Natural killer cell (primary cell): ENCODE measurements at regions of chr6 and their contacts with region 1.

Region 1: DNA sequence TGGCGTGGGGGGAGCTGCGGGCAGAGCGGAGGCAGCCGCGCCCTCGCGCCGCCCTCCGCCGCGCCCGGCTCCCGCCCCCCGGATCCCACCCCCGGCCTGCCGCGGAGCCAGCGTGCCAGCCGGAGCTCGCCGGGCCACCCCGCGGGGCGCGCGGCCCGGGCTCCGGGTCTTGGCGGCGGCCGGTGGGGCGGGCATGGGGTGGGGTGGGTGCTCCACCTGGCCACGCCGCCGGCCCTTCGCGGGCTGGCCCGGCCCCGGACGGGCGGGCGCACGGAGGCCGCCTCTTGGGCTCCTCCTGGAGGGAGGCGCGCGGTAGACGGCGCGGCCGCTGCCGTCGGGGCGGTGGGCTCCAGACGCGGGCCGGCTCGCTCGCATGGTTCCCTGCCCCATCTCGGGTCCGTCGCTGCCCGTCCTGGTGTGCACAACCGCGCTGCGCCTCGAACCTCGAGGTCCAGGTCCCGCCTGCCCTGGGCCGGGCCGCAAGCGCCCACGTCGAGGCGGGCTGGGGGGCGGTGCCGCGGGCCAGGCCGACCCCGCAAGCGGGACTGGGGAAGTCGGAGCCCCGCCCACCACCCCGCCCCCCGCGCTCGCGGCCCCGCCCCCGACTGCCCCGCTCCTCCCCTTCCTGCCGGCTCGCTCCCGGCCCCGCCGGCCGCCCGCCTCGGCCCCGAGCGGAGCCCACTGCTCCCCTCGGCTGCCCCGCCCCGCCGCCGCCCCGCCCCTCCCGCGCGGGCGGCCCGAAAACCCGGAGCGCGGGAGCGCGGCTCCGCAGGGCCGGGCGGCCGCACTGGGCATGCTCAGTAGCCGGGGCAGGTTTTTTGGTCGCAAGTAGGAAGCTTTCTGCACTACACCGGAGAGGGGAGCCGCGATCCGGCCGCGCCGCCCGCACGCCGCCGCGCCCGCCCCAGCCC is at the start of gene CDYL:
- DNase-seq: peak; percentile 90 to 94
- ATAC-seq: peak; percentile 77 to 92 (median 80)
- H3K4me3 ChIP-seq: peak within 1 kb of the TSS; percentile 53
- H3K4me3 Mint-ChIP-seq: peak within 1 kb of the TSS; percentile 97
- H3K27ac ChIP-seq: peak within 1 kb of the TSS; percentile 46
- H3K27ac Mint-ChIP-seq: peak within 1 kb of the TSS; percentile 88 to 95
- H3K4me1 ChIP-seq: peaks cover 10% of the 10 kb centered on the region
- H3K4me1 Mint-ChIP-seq: peaks cover 43 to 45% of the 10 kb centered on the region in 2 donors
- H3K27me3 ChIP-seq: no peaks in the 10 kb centered on the region
- H3K27me3 Mint-ChIP-seq: no peaks in the 10 kb centered on the region
- CTCF ChIP-seq: no peak
- total RNA-seq, gene CDYL: 81.3 to 101 (median 83.8) TPM

Region 2: GRCh38 chr6:4018172-4018905 is 757.5 kb before region 1 on chr6:
- intact Hi-C with region 1: loop called (anchors 10 kb)
- DNase-seq: peak; percentile 91 to 99
- ATAC-seq: peak; percentile 67 to 86 (median 73)
- H3K4me3 ChIP-seq: peak overlapping the region; percentile 91
- H3K4me3 Mint-ChIP-seq: peak overlapping the region; percentile 98
- H3K27ac ChIP-seq: peak overlapping the region; percentile 98
- H3K27ac Mint-ChIP-seq: peak overlapping the region; percentile 98
- H3K4me1 ChIP-seq: peaks cover 20% of the 10 kb centered on the region
- H3K4me1 Mint-ChIP-seq: peaks cover 59 to 68% of the 10 kb centered on the region in 2 donors
- H3K27me3 ChIP-seq: no peaks in the 10 kb centered on the region
- H3K27me3 Mint-ChIP-seq: no peaks in the 10 kb centered on the region
- CTCF ChIP-seq: peak; percentile 33

Region 3: GRCh38 chr6:4606821-4607704 is 168.8 kb before region 1 on chr6:
- intact Hi-C with region 1: loop called (anchors 10 kb)
- DNase-seq: peak in 1 of 2 donors; percentile 19
- ATAC-seq: peak; percentile 34 to 69 (median 51)
- H3K4me3 ChIP-seq: peak overlapping the region; percentile 15
- H3K4me3 Mint-ChIP-seq: peak overlapping the region; percentile 81
- H3K27ac ChIP-seq: peak overlapping the region; percentile 45
- H3K27ac Mint-ChIP-seq: peak overlapping the region; percentile 77 to 84
- H3K4me1 ChIP-seq: peaks cover 49% of the 10 kb centered on the region
- H3K4me1 Mint-ChIP-seq: peaks cover 64 to 69% of the 10 kb centered on the region in 2 donors
- H3K27me3 ChIP-seq: no peaks in the 10 kb centered on the region
- H3K27me3 Mint-ChIP-seq: no peaks in the 10 kb centered on the region
- CTCF ChIP-seq: no peak

Region 4: DNA sequence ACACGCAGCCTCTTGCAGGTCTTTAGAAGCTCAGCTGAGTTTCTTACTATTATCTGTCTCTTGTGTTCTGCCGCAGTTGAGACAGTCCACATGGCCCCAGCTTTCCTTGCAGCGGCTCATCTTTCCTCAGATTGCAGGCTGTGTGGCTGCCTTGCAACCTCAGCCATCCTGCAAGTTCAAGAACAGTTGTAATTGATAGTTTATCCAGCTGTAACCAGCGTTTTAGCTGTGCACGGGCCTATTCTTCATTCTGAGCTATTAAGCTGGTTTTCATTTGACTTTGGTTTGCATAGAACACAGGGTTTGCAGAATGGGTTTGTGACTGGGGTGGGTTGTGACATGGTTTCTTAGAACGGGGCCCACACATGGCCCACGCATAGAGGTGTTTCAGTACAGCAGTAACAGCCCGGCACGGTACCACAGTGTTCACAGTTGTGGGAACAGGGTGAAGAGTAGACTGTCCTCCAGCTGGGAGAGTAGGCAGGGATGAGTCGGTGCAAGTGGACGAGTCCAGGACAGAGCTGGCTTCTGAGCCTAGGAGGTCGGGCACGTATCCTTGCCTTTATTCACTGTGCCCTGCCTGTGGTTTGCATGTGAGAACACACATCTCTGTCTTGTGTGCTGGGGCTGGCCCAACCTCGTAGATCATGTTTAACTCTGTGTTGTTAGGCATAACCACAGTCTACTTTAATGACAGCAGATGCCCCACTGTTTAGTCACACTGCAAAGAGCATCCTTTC is 138.8 kb after region 1 on chr6:
- intact Hi-C with region 1: loop called (anchors 10 kb)
- DNase-seq: peak; percentile 25 to 35
- ATAC-seq: peak; percentile 84 to 90 (median 87)
- H3K4me3 ChIP-seq: no peak overlapping the region
- H3K4me3 Mint-ChIP-seq: peak overlapping the region; percentile 52
- H3K27ac ChIP-seq: no peak overlapping the region
- H3K27ac Mint-ChIP-seq: peak overlapping the region; percentile 66 to 83
- H3K4me1 ChIP-seq: peaks cover 16% of the 10 kb centered on the region
- H3K4me1 Mint-ChIP-seq: peaks cover 67 to 72% of the 10 kb centered on the region in 2 donors
- H3K27me3 ChIP-seq: no peaks in the 10 kb centered on the region
- H3K27me3 Mint-ChIP-seq: no peaks in the 10 kb centered on the region
- CTCF ChIP-seq: no peak

Region 5: GRCh38 chr6:5517796-5518195 is 742.0 kb after region 1 on chr6:
- intact Hi-C with region 1: loop called (anchors 5 kb)
- DNase-seq: peak; percentile 36 to 60
- ATAC-seq: peak; percentile 73 to 79 (median 76)
- H3K4me3 ChIP-seq: no peak overlapping the region
- H3K4me3 Mint-ChIP-seq: peak overlapping the region; percentile 80
- H3K27ac ChIP-seq: peak overlapping the region; percentile 42
- H3K27ac Mint-ChIP-seq: peak overlapping the region; percentile 82 to 89
- H3K4me1 ChIP-seq: peaks cover 44% of the 10 kb centered on the region
- H3K4me1 Mint-ChIP-seq: peaks cover 61 to 63% of the 10 kb centered on the region in 2 donors
- H3K27me3 ChIP-seq: no peaks in the 10 kb centered on the region
- H3K27me3 Mint-ChIP-seq: peaks cover 0 to under 1% of the 10 kb centered on the region in 2 donors
- CTCF ChIP-seq: no peak